ENCODE measurements at regions of chr11 and their contacts with region 1.

Region 1: DNA sequence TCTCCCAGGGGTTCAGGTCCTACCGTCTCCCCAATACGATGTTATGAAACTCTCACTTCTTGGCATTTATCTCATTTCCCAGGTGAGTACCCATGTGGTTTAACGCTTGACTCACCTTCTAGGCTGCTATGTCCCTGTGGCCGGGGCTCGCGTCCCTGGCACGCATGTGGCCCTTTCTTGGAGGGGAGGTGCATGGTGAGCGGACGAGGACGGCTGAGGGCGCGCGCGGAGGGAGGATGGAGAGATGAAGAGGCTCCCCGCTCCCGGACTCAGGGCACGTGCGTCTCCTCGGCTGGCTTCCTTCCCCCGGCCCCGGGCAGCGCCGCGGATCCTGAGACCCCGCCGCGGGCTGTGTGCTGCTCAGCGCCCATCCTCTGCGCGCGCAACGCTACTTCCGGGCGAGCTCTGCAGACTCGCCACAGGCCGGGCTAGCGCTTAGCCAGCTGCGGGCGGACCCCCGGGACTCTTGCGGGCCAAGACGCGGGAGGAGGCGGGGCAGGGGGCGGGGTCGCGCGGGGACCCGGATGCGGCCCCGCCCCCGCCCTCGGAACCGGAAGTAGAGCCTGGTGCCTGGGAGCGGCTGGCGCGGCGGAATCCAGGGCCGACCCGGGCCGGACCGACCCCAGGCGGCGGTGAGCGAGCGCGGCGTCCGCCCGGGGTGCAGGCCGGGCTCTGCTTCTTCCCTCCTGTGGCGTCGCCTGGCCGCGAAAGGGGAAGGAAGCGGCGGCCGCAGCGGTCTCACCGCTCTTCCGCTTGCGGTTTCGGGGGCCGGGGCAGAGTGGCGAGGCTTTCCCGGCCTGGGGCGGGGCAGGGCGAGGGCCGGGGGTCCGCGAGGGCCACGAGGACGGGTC is at the start of gene CTTN:
- DNase-seq: peak; percentile 80 to 91
- H3K4me3 ChIP-seq: peak within 1 kb of the TSS; percentile 85 to 90
- H3K27ac ChIP-seq: peak within 1 kb of the TSS; percentile 86 to 94
- H3K4me1 ChIP-seq: peaks cover 0 to 40% (median 23%) of the 10 kb centered on the region in 4 donors
- H3K27me3 ChIP-seq: no peaks in the 10 kb centered on the region
- CTCF ChIP-seq: no peak

Region 2: DNA sequence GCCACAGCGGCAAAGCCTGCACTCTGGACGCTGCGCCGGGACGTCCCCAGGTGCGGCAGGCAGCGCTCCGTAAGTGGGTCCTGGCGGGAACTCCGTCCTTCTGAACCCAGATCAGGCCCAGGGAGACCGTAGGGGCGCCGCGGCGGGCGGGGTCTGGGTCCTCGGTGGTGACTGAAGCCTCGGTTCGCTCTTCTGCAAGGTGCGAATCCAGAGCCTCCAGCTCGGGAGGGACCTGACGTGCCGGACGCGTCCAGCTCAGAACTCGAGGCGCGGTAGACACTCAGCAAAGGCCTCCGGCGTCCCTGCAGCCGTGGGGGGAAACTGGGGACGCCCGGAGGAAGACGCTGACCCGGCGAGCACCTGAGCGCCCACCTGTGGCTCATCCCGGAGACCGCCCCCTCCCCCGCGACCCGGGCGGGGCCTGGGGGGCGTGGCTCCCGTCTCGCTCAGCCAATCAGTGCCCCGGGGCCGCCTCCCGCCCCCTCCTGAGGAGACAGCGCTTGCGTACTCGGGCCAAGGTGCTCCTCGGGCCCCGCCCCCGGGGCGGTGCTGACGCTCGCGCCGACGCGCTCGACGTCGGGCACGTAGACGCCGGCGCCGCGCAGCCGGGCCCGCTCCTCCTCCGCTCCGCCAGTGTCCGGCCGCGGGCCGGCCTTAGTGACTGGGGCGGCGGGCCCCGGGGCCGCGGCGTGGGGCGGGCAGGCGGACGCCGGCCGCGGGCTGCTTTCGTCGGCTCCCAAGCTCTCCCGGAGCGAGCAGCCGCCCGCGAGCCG is 127.9 kb before region 1 on chr11 and contains the start of gene PPFIA1:
- intact Hi-C with region 1: loop called (anchors 2 kb)
- DNase-seq: peak; percentile 93 to 97
- H3K4me3 ChIP-seq: peak within 1 kb of the TSS; percentile 88
- H3K27ac ChIP-seq: peak within 1 kb of the TSS; percentile 81 to 85
- H3K4me1 ChIP-seq: peaks cover 0 to 27% (median 12%) of the 10 kb centered on the region in 4 donors
- H3K27me3 ChIP-seq: no peaks in the 10 kb centered on the region
- CTCF ChIP-seq: no peak

Region 3: DNA sequence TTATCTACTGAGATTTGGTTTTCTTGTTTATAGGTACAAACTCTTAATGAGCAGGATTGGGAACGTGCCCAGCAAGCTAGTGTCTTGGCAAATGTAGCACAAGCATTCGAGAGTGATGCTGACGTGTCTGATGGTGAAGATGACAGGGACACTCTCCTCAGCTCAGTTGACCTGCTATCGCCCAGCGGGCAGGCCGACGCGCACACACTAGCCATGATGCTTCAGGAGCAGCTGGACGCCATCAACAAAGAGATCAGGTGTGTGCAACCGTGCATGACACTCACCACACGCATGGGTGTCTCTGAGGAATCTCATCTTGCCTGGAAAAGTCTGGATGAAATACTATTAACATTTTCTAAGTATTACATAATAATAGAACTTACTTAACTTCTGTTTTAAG is 54.6 kb before region 1 on chr11:
- intact Hi-C with region 1: loop called (anchors 2 kb)
- DNase-seq: no peak
- H3K4me3 ChIP-seq: no peak overlapping the region
- H3K27ac ChIP-seq: no peak overlapping the region
- H3K4me1 ChIP-seq: no peaks in the 10 kb centered on the region
- H3K27me3 ChIP-seq: no peaks in the 10 kb centered on the region
- CTCF ChIP-seq: no peak

Region 4: GRCh38 chr11:70358753-70359152 is 39.5 kb before region 1 on chr11:
- intact Hi-C with region 1: no loop called
- DNase-seq: no peak
- H3K4me3 ChIP-seq: no peak overlapping the region
- H3K27ac ChIP-seq: peak overlapping the region in 1 of 2 donors; percentile 61
- H3K4me1 ChIP-seq: peaks cover 0 to 45% (median 8%) of the 10 kb centered on the region in 4 donors
- H3K27me3 ChIP-seq: no peaks in the 10 kb centered on the region
- CTCF ChIP-seq: no peak

Region 5: GRCh38 chr11:70511340-70511739 is 113.1 kb after region 1 on chr11:
- intact Hi-C with region 1: no loop called
- DNase-seq: no peak
- H3K4me3 ChIP-seq: no peak overlapping the region
- H3K27ac ChIP-seq: no peak overlapping the region
- H3K4me1 ChIP-seq: no peaks in the 10 kb centered on the region
- H3K27me3 ChIP-seq: peaks cover 0 to 20% of the 10 kb centered on the region in 2 donors
- CTCF ChIP-seq: no peak

Region 6: DNA sequence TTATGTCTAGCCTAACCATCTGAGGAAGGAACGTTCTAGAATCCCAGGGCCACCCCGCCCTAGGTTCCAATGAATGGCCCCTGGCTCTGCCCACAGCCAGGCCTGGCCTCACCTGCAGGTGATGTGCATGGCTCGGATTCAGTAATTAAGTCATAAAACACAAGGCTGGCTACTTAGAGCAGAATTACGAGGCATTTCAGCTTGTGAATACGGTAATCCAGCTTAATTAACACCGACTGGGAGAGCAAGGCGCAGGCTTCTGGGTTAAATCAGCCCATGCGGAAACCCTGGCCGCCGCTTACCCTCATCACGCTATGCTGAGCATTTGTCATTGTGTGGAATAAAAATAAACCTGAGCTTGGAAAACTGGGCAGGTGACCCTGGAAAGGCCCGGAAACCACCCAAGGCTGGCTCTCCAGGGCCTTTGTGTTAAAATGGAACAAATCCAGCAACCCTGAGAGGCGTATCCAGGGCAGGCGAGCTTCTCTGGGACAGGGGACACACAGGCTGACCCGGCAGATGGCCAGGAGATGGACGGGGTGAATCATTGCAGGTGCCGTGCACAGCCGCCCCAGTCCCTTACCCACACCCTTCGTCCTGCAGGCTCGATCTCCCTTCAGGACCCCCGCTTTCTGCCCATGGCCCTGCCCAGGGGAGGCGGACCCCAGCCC is 220.4 kb after region 1 on chr11:
- intact Hi-C with region 1: no loop called
- DNase-seq: no peak
- H3K4me3 ChIP-seq: no peak overlapping the region
- H3K27ac ChIP-seq: no peak overlapping the region
- H3K4me1 ChIP-seq: no peaks in the 10 kb centered on the region
- H3K27me3 ChIP-seq: peaks cover 0 to 38% of the 10 kb centered on the region in 2 donors
- CTCF ChIP-seq: no peak

Measured in tibial artery (tissue), 4 donors.